ENCODE measurements at regions of chr6 and their contacts with region 1.

Region 1: GRCh38 chr6:36546920-36547645 is at the start of gene STK38:
- DNase-seq: peak; percentile 79 to 96 (median 89)
- ATAC-seq: peak; percentile 74 to 78 (median 77)
- H3K4me3 ChIP-seq: peak within 1 kb of the TSS; percentile 67 to 88
- H3K4me3 Mint-ChIP-seq: peak within 1 kb of the TSS; percentile 99 to 100 (median 100)
- H3K27ac ChIP-seq: peak within 1 kb of the TSS; percentile 81
- H3K27ac Mint-ChIP-seq: peak within 1 kb of the TSS; percentile 100
- H3K4me1 ChIP-seq: peaks cover 26 to 34% of the 10 kb centered on the region in 2 experiments
- H3K4me1 Mint-ChIP-seq: peaks cover 35 to 53% (median 52%) of the 10 kb centered on the region in 3 donors
- H3K27me3 ChIP-seq: no peaks in the 10 kb centered on the region
- H3K27me3 Mint-ChIP-seq: no peaks in the 10 kb centered on the region
- total RNA-seq, gene STK38: 90.3 to 164 (median 152) TPM

Region 2: GRCh38 chr6:36533321-36533720 is 13.8 kb before region 1 on chr6:
- CTCF ChIA-PET with region 1: interaction called in 1 of 2 experiments, 5 read pairs
- POLR2A ChIA-PET with region 1: interaction called, 3 to 21 read pairs
- DNase-seq: no peak
- ATAC-seq: no peak
- H3K4me3 ChIP-seq: no peak overlapping the region
- H3K4me3 Mint-ChIP-seq: peak overlapping the region in 1 of 3 donors; percentile 42
- H3K27ac ChIP-seq: no peak overlapping the region
- H3K27ac Mint-ChIP-seq: peak overlapping the region; percentile 8 to 84
- H3K4me1 ChIP-seq: peaks cover 10 to 26% of the 10 kb centered on the region in 2 experiments
- H3K4me1 Mint-ChIP-seq: peaks cover 84 to 88% (median 85%) of the 10 kb centered on the region in 3 donors
- H3K27me3 ChIP-seq: no peaks in the 10 kb centered on the region
- H3K27me3 Mint-ChIP-seq: no peaks in the 10 kb centered on the region

Region 3: DNA sequence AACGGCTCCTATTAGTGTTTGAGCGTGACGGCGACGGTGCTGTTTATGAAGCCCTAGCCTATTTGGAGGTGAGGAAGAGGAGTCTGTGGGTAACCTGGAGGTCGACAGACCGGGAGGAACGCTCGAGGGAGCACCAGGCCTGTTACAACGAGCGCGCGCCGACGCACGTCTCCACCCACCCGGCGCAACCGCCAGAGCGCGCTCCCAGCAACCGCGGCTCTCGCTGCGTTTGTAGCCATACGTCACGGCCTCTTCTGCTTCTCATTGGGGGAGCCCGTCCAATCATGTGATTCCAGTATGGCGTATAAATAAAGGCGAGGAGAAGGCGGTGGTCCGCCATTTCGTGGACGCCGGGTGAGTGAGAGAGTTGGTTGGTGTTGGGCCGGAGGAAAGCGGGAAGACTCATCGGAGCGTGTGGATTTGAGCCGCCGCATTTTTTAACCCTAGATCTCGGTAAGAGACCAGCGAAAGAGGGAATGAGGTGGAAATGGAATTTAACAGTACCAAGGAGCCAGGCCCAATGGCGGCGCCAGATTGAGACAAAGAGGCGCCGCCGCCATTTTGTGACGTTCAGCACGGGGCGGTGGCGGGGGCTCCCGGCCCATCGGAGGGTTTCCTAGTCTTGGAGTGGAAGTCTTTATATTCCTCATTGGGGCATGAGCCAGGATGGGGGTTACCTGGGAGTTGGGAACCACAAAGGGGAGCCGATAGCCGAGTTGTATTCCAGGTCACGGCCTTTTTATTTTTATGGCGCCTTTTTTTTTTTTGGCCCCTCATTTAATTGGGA is 47.1 kb after region 1 on chr6 and contains the start of gene SRSF3:
- CTCF ChIA-PET with region 1: interaction called in 1 of 2 experiments, 6 read pairs
- POLR2A ChIA-PET with region 1: interaction called, 8 to 16 read pairs
- DNase-seq: peak; percentile 81 to 99 (median 95)
- ATAC-seq: peak; percentile 89 to 95 (median 94)
- H3K4me3 ChIP-seq: peak within 1 kb of the TSS; percentile 93 to 99
- H3K4me3 Mint-ChIP-seq: peak within 1 kb of the TSS; percentile 90 to 96 (median 96)
- H3K27ac ChIP-seq: peak within 1 kb of the TSS; percentile 98
- H3K27ac Mint-ChIP-seq: peak within 1 kb of the TSS; percentile 98
- H3K4me1 ChIP-seq: peaks cover 30 to 49% of the 10 kb centered on the region in 2 experiments
- H3K4me1 Mint-ChIP-seq: peaks cover 35 to 51% (median 47%) of the 10 kb centered on the region in 3 donors
- H3K27me3 ChIP-seq: no peaks in the 10 kb centered on the region
- H3K27me3 Mint-ChIP-seq: no peaks in the 10 kb centered on the region
- total RNA-seq, gene SRSF3: 322 to 546 (median 332) TPM

Region 4: GRCh38 chr6:36599791-36600209 is 52.7 kb after region 1 on chr6:
- CTCF ChIA-PET with region 1: interaction called in 1 of 2 experiments, 6 read pairs
- POLR2A ChIA-PET with region 1: interaction called, 8 to 16 read pairs
- DNase-seq: peak in 34 of 35 experiments; percentile 27 to 70 (median 55)
- ATAC-seq: peak; percentile 35 to 72 (median 57)
- H3K4me3 ChIP-seq: peak overlapping the region; percentile 16 to 38
- H3K4me3 Mint-ChIP-seq: peak overlapping the region; percentile 90 to 96 (median 96)
- H3K27ac ChIP-seq: peak overlapping the region; percentile 98
- H3K27ac Mint-ChIP-seq: peak overlapping the region; percentile 82 to 86
- H3K4me1 ChIP-seq: peaks cover 51 to 71% of the 10 kb centered on the region in 2 experiments
- H3K4me1 Mint-ChIP-seq: peaks cover 76 to 80% (median 78%) of the 10 kb centered on the region in 3 donors
- H3K27me3 ChIP-seq: no peaks in the 10 kb centered on the region
- H3K27me3 Mint-ChIP-seq: no peaks in the 10 kb centered on the region

Measured in T-cell (primary cell).